ENCODE measurements at regions of chr6 and their contacts with region 1.

Region 1: DNA sequence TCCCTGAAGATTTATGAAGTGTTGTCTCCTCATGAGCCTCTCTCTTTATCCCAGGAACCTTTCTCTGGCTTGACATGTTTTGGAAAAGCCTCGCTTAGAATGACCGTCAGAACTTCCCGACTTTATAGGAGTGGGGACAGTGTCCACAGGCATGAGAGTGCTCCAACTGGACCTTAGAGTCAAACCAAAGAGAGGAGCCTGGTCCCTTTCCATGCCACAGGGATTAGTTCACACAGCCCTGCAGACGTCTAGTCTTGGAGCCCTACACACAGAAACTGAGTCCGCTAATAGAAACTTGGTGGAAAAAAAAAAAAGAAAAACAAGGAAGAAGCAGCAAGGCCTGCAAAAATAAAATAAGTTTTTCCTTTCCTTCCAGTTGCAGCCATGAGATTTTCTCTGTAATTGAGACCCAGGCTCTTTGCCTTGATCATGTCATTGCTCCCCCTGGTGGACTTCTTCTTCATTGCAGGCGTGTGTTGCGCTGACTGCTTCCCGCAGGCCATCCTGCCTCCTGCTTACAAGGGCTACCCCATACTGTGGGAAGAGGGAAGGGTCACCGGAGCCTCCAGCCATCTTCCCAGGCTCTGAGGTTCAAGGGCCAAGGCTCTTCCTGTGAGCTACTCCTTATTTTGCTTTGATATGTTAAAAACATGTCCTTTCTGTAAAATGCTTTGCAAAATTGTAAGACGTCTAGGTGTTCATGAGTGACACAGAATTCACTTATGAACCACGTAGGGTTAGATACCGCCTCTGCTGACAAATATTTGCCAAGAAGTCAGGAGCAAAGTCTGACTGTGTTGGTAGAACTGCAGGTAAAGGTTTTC is 201.0 kb downstream of the UST start:
- DNase-seq: peak; percentile 62
- H3K4me3 ChIP-seq: no peak overlapping the region
- H3K27ac ChIP-seq: no peak overlapping the region
- H3K4me1 ChIP-seq: peaks cover 9% of the 10 kb centered on the region
- H3K27me3 ChIP-seq: no peaks in the 10 kb centered on the region
- CTCF ChIP-seq: peak; percentile 86 to 88

Region 2: GRCh38 chr6:148559848-148560433 is 387.9 kb before region 1 on chr6:
- CTCF ChIA-PET with region 1: no interaction called
- dilution Hi-C with region 1: no loop called
- in situ Hi-C with region 1: no loop called
- intact Hi-C with region 1: loop called (anchors 1 kb)
- DNase-seq: peak; percentile 35
- H3K4me3 ChIP-seq: peak overlapping the region in 2 of 3 experiments; percentile 38 to 45
- H3K27ac ChIP-seq: no peak overlapping the region
- H3K4me1 ChIP-seq: peaks cover 5% of the 10 kb centered on the region
- H3K27me3 ChIP-seq: no peaks in the 10 kb centered on the region
- CTCF ChIP-seq: peak; percentile 86 to 89

Region 3: GRCh38 chr6:148578245-148578732 is 369.5 kb before region 1 on chr6:
- CTCF ChIA-PET with region 1: no interaction called
- dilution Hi-C with region 1: no loop called
- in situ Hi-C with region 1: loop called in 1 of 2 experiments (anchors 25 kb)
- intact Hi-C with region 1: loop called (anchors 1 kb)
- DNase-seq: peak; percentile 53
- H3K4me3 ChIP-seq: no peak overlapping the region
- H3K27ac ChIP-seq: no peak overlapping the region
- H3K4me1 ChIP-seq: no peaks in the 10 kb centered on the region
- H3K27me3 ChIP-seq: no peaks in the 10 kb centered on the region
- CTCF ChIP-seq: peak; percentile 64 to 95

Region 4: DNA sequence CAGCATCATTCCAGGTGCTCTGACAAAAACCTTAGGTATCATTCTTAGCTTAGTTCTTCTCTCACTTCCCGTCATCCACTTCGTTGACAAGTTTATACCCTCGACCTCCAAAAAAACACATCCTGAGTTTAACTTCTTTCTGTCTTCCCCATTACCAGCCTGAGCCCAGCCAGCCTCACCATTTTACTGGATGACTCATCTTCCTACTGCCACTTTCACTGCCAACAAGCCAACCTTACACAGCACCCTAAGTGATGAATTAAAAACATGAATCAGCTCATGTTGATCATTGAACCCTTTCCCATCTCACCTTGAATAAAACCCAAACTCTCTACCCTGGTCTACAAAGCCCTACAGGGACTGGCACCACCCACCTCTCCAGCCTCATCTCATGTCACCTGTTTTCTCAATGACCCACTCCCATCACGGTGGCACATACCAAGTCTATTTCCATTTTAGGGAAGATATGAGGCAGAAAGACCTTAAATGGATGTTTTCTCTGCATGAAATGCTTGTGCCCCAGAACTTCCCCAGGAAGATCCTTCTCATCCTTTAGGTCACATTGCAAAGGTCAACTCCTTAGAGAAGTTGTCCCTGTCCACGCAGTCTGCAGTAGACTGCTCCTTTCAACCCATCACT is 210.9 kb before region 1 on chr6:
- CTCF ChIA-PET with region 1: no interaction called
- dilution Hi-C with region 1: no loop called
- in situ Hi-C with region 1: loop called in 1 of 2 experiments (anchors 5 kb)
- intact Hi-C with region 1: no loop called
- DNase-seq: peak; percentile 26
- H3K4me3 ChIP-seq: no peak overlapping the region
- H3K27ac ChIP-seq: no peak overlapping the region
- H3K4me1 ChIP-seq: no peaks in the 10 kb centered on the region
- H3K27me3 ChIP-seq: no peaks in the 10 kb centered on the region
- CTCF ChIP-seq: no peak

Region 5: GRCh38 chr6:148854096-148854495 is 93.7 kb before region 1 on chr6:
- CTCF ChIA-PET with region 1: no interaction called
- dilution Hi-C with region 1: no loop called
- in situ Hi-C with region 1: no loop called
- intact Hi-C with region 1: loop called (anchors 5 kb)
- DNase-seq: peak; percentile 80
- H3K4me3 ChIP-seq: no peak overlapping the region
- H3K27ac ChIP-seq: no peak overlapping the region
- H3K4me1 ChIP-seq: peaks cover 41% of the 10 kb centered on the region
- H3K27me3 ChIP-seq: no peaks in the 10 kb centered on the region
- CTCF ChIP-seq: no peak